Activated CD4-positive, alpha-beta T cell treated with anti-CD3 and anti-CD28 coated beads for 36 hours (primary cell): ENCODE measurements at regions of chr12 and their contacts with region 1.

Region 1: GRCh38 chr12:64222009-64222765 is at the start of gene KICS2:
- DNase-seq: peak; percentile 95
- ATAC-seq: peak; percentile 92
- H3K4me3 Mint-ChIP-seq: peak within 1 kb of the TSS; percentile 92
- H3K27ac Mint-ChIP-seq: peak within 1 kb of the TSS; percentile 96
- H3K4me1 Mint-ChIP-seq: peaks cover 30% of the 10 kb centered on the region
- H3K27me3 Mint-ChIP-seq: peaks cover 4% of the 10 kb centered on the region
- total RNA-seq, gene KICS2: 15.1 to 16.6 TPM

Region 2: GRCh38 chr12:63779498-63780481 is 442.4 kb before region 1 on chr12 and contains the start of gene RXYLT1:
- CTCF ChIA-PET with region 1: no interaction called
- POLR2A ChIA-PET with region 1: no interaction called
- intact Hi-C with region 1: loop called (anchors 1 kb)
- DNase-seq: peak; percentile 92
- ATAC-seq: peak; percentile 94
- H3K4me3 Mint-ChIP-seq: peak within 1 kb of the TSS; percentile 94
- H3K27ac Mint-ChIP-seq: peak within 1 kb of the TSS; percentile 95
- H3K4me1 Mint-ChIP-seq: peaks cover 10% of the 10 kb centered on the region
- H3K27me3 Mint-ChIP-seq: no peaks in the 10 kb centered on the region
- total RNA-seq, gene RXYLT1: 14.8 to 15.6 TPM

Region 3: DNA sequence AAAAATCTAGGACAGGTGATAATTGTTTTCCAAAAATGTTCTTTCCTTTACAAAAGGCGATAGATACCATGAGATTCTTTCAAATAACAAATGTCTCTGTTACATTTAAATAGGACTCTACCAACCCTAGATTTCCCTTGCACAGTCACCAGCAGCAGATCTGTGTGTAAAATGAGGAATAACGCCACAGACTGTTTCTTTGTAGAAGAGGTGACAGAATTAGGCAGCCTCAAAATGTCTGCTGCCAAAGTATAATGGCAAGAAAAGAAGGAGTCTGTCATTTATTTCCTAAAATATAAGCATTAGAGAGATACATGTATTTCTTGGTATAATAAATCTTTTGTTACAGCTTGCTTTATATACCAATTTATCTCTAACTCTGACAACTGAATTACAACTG is 386.1 kb before region 1 on chr12:
- CTCF ChIA-PET with region 1: no interaction called
- POLR2A ChIA-PET with region 1: interaction called, 11 read pairs
- intact Hi-C with region 1: no loop called
- DNase-seq: no peak
- ATAC-seq: no peak
- H3K4me3 Mint-ChIP-seq: no peak overlapping the region
- H3K27ac Mint-ChIP-seq: no peak overlapping the region
- H3K4me1 Mint-ChIP-seq: no peaks in the 10 kb centered on the region
- H3K27me3 Mint-ChIP-seq: peaks cover 4% of the 10 kb centered on the region

Region 4: GRCh38 chr12:63843721-63844390 is 378.3 kb before region 1 on chr12:
- CTCF ChIA-PET with region 1: interaction called, 6 read pairs
- POLR2A ChIA-PET with region 1: no interaction called
- intact Hi-C with region 1: loop called in 1 of 2 experiments (anchors 1 kb)
- DNase-seq: peak; percentile 89
- ATAC-seq: peak; percentile 97
- H3K4me3 Mint-ChIP-seq: peak overlapping the region; percentile 54
- H3K27ac Mint-ChIP-seq: no peak overlapping the region
- H3K4me1 Mint-ChIP-seq: peaks cover 8% of the 10 kb centered on the region
- H3K27me3 Mint-ChIP-seq: peaks cover 26% of the 10 kb centered on the region

Region 5: GRCh38 chr12:64403707-64404469 is 181.7 kb after region 1 on chr12 and contains the start of gene XPOT:
- CTCF ChIA-PET with region 1: no interaction called
- POLR2A ChIA-PET with region 1: no interaction called
- intact Hi-C with region 1: loop called (anchors 1 kb)
- DNase-seq: peak; percentile 97
- ATAC-seq: peak; percentile 90
- H3K4me3 Mint-ChIP-seq: peak within 1 kb of the TSS; percentile 97
- H3K27ac Mint-ChIP-seq: peak within 1 kb of the TSS; percentile 96
- H3K4me1 Mint-ChIP-seq: peaks cover 38% of the 10 kb centered on the region
- H3K27me3 Mint-ChIP-seq: no peaks in the 10 kb centered on the region
- total RNA-seq, gene XPOT: 179 to 187 TPM

Region 6: GRCh38 chr12:64451687-64452558 is 229.7 kb after region 1 on chr12 and contains the start of gene TBK1:
- CTCF ChIA-PET with region 1: no interaction called
- POLR2A ChIA-PET with region 1: no interaction called
- intact Hi-C with region 1: loop called in 1 of 2 experiments (anchors 5 kb)
- DNase-seq: peak; percentile 75
- ATAC-seq: peak; percentile 64
- H3K4me3 Mint-ChIP-seq: peak within 1 kb of the TSS; percentile 89
- H3K27ac Mint-ChIP-seq: peak within 1 kb of the TSS; percentile 98
- H3K4me1 Mint-ChIP-seq: peaks cover 40% of the 10 kb centered on the region
- H3K27me3 Mint-ChIP-seq: no peaks in the 10 kb centered on the region
- total RNA-seq, gene TBK1: 14.0 to 15.4 TPM

Region 7: DNA sequence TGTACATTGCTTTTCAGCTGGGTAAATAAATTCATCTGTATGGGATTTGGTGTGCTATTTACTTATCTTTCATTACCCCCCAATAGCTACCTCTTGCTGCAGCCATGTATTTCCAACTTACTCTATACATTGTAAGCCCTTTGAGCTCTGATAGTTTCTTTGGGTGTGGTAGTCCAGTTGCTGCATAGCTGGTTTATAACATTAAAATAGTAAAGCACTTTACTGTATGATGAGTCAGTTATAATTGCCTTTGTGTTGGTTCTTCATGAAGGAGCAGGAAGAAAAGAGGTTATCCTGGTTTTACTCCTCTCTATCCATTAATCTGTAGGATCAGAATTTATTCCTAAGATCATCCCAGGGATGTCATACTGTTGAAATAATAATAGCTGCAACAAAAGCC is 617.9 kb after region 1 on chr12:
- CTCF ChIA-PET with region 1: no interaction called
- POLR2A ChIA-PET with region 1: no interaction called
- intact Hi-C with region 1: no loop called
- DNase-seq: no peak
- ATAC-seq: no peak
- H3K4me3 Mint-ChIP-seq: no peak overlapping the region
- H3K27ac Mint-ChIP-seq: no peak overlapping the region
- H3K4me1 Mint-ChIP-seq: no peaks in the 10 kb centered on the region
- H3K27me3 Mint-ChIP-seq: no peaks in the 10 kb centered on the region